ENCODE measurements at regions of chr4 and their contacts with region 1.

Region 1: DNA sequence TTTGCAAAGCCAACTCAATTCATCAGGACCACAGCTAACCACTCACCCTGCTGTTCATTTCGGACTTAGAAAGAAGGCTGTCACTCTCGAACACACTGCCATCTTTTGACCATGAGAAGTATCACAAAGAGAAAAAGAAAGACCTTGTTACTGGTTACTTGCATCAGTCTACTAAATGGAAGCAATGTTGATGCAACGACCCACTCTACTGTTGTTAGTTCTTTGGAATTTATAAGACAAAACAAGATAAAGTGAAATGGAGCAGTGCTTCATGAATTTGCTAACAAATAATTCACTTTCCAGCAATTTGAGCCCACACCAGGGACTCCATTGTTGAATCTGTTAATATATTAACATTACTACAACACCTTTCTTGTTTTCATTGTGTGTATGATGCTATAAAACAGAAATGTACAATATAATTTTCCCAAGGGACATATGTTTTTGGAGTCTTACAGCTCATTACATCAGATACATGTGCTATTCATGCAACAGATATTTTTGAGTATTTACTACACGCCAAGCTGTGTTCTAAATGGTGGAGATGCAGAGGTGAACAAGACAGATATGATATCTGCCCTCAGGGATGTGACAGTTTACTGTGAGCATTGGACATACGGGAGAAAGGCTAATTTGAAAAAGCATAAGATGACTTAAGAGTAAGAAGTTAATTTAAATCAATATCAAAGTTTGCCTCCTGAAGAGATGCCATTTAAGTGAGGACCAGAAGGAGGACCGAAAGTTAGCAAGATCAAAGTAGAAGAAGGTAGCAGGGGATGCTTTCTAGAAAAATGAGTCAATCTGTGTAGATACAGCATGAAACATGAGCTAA is 87.2 kb downstream of the AREG start:
- DNase-seq: peak in 1 of 4 donors; percentile 36
- ATAC-seq: peak; percentile 84
- H3K4me3 ChIP-seq: no peak overlapping the region
- H3K27ac ChIP-seq: no peak overlapping the region
- H3K4me1 ChIP-seq: no peaks in the 10 kb centered on the region
- H3K27me3 ChIP-seq: no peaks in the 10 kb centered on the region
- CTCF ChIP-seq: peak in 1 of 2 donors; percentile 40

Region 2: GRCh38 chr4:74370912-74371311 is 161.3 kb before region 1 on chr4:
- intact Hi-C with region 1: loop called in 1 of 2 experiments (anchors 10 kb)
- DNase-seq: peak in 1 of 4 donors; percentile 29
- ATAC-seq: peak; percentile 85
- H3K4me3 ChIP-seq: no peak overlapping the region
- H3K27ac ChIP-seq: no peak overlapping the region
- H3K4me1 ChIP-seq: peaks cover 0 to 9% of the 10 kb centered on the region in 2 donors
- H3K27me3 ChIP-seq: peaks cover 0 to under 1% of the 10 kb centered on the region in 2 donors
- CTCF ChIP-seq: peak; percentile 62 to 66

Region 3: DNA sequence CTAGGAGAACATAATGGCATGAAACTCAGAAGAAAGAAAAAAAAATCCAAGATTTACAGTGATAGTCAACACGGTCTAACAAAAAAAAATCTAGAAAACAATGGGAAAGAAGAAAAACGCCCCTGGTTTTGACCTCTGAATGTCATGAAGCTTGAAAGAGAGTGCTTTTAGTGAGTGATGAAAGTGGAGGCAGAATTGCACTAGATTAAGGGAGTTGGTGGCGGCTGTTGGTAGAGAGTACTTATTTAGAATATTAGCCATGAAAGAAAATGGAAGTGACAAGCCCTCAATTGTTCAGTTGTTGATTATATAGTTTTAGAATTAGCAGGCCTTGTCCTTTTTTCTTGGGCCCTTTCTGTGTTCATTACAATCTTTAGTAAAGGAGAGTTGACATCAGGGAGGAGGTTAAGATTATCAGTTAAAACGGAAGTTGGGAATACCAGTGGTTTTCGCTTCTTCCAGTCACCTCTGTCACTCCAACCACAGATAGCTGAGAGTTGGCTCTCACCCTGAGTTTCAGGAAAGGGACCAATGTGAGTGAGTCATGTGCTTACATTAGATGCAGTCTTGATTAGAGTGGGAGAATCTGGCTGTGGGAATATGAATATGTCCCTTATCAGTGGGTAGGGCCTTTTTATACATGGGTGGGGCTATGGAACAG is 137.6 kb before region 1 on chr4:
- intact Hi-C with region 1: no loop called
- DNase-seq: no peak
- ATAC-seq: no peak
- H3K4me3 ChIP-seq: no peak overlapping the region
- H3K27ac ChIP-seq: no peak overlapping the region
- H3K4me1 ChIP-seq: no peaks in the 10 kb centered on the region
- H3K27me3 ChIP-seq: no peaks in the 10 kb centered on the region
- CTCF ChIP-seq: no peak

Region 4: GRCh38 chr4:74814052-74814451 is 281.9 kb after region 1 on chr4:
- intact Hi-C with region 1: no loop called
- DNase-seq: no peak
- ATAC-seq: no peak
- H3K4me3 ChIP-seq: no peak overlapping the region
- H3K27ac ChIP-seq: no peak overlapping the region
- H3K4me1 ChIP-seq: no peaks in the 10 kb centered on the region
- H3K27me3 ChIP-seq: no peaks in the 10 kb centered on the region
- CTCF ChIP-seq: no peak

Measured in left lung (tissue), 14 donors.